GM12878 (cell line): ENCODE measurements at regions of chr4 and their contacts with region 1.

Region 1: DNA sequence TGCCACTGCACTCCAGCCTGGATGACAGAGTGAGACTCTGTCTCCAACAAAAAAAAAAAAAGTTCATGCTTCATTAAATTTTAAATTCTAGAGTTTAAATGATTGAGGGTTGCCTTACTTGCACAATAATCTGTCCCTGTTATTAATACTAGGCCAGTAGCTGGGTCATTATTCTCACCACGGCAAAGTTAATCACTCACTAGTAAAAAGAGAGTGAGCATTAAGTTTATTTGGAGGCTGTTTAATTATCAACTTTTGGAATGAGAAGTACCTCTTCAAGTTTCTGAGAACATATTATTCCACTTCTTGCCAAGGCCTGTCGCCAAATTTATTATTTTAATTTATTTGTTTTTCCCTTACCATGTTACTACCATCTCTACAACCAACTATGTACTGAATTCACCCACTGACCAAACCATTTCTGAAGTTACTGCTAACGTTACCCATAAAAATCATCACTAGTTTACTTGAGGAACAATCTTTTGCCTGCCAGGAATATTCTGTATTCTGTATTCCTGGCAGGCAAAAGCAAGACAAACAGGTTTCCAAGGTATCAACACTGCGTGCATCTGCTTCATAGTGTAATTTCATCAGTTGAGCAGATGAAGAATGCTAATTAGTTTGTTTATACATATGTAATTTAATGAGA is 26.5 kb downstream of the GUCY1A1 start:
- DNase-seq: no peak
- ATAC-seq: peak; percentile 25; the same call in 2 of the 3 replicates
- H3K4me3 ChIP-seq: no peak overlapping the region
- H3K27ac ChIP-seq: no peak overlapping the region
- H3K4me1 ChIP-seq: no peaks in the 10 kb centered on the region
- H3K27me3 ChIP-seq: no peaks in the 10 kb centered on the region
- CTCF ChIP-seq: no peak
- EP300 ChIP-seq: no peak
- POLR2A ChIP-seq: no peak
- RAD21 ChIP-seq: no peak

Region 2: GRCh38 chr4:155604718-155605626 is 88.2 kb before region 1 on chr4:
- CTCF ChIA-PET with region 1: no interaction called
- POLR2A ChIA-PET with region 1: no interaction called
- RAD21 ChIA-PET with region 1: no interaction called
- SMC1A ChIA-PET with region 1: no interaction called
- in situ Hi-C with region 1: no loop called
- intact Hi-C with region 1: no loop called
- DNase-seq: no peak
- ATAC-seq: no peak
- H3K4me3 ChIP-seq: no peak overlapping the region
- H3K27ac ChIP-seq: no peak overlapping the region
- H3K4me1 ChIP-seq: no peaks in the 10 kb centered on the region
- H3K27me3 ChIP-seq: no peaks in the 10 kb centered on the region
- CTCF ChIP-seq: no peak
- EP300 ChIP-seq: no peak
- POLR2A ChIP-seq: no peak
- RAD21 ChIP-seq: no peak

Region 3: GRCh38 chr4:155646001-155646400 is 47.1 kb before region 1 on chr4:
- CTCF ChIA-PET with region 1: no interaction called
- POLR2A ChIA-PET with region 1: no interaction called
- RAD21 ChIA-PET with region 1: no interaction called
- SMC1A ChIA-PET with region 1: no interaction called
- in situ Hi-C with region 1: no loop called
- intact Hi-C with region 1: no loop called
- DNase-seq: no peak
- ATAC-seq: no peak
- H3K4me3 ChIP-seq: no peak overlapping the region
- H3K27ac ChIP-seq: no peak overlapping the region
- H3K4me1 ChIP-seq: no peaks in the 10 kb centered on the region
- H3K27me3 ChIP-seq: no peaks in the 10 kb centered on the region
- CTCF ChIP-seq: no peak
- EP300 ChIP-seq: no peak
- POLR2A ChIP-seq: no peak
- RAD21 ChIP-seq: no peak

Region 4: DNA sequence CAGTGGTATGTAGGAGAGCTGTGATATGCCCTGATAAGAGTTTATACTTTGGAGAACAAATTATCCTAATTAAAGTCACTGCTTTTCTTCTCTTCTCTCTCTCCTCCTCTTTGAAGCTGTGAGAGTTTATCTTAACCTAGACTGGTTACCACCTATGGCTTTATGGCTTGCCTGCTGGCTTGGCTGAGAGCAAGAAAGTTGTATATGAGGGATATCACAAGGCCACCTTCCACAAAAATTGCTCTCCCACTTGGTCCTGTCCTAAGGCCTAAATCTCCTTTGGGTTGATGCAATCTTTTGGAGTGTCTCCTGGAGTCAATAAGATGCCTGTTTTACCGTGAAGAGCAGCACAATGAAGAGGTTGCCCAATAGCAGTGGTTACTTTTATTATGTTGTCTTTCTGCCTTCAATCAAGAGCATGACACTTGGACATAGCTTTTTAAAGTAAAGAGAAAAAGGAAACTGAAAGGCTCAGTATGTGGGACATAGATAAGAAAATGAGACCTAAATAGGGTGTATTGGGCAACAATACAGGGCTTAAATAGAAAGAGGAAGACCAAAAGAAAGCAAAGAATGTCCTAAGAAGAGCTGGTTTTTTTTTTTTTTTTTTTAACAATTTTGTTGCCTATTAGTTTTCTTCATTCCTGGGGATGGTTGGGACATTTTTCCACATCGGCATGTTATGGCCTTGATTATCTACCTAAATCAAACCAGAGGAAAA is 17.3 kb before region 1 on chr4:
- CTCF ChIA-PET with region 1: interaction called, 9 read pairs
- POLR2A ChIA-PET with region 1: interaction called, 10 read pairs
- RAD21 ChIA-PET with region 1: interaction called, 13 read pairs
- SMC1A ChIA-PET with region 1: interaction called, 52 read pairs
- in situ Hi-C with region 1: no loop called
- intact Hi-C with region 1: no loop called
- DNase-seq: no peak
- ATAC-seq: peak; percentile 86
- H3K4me3 ChIP-seq: no peak overlapping the region
- H3K27ac ChIP-seq: no peak overlapping the region
- H3K4me1 ChIP-seq: no peaks in the 10 kb centered on the region
- H3K27me3 ChIP-seq: no peaks in the 10 kb centered on the region
- CTCF ChIP-seq: no peak
- EP300 ChIP-seq: no peak
- POLR2A ChIP-seq: no peak
- RAD21 ChIP-seq: no peak

Region 5: DNA sequence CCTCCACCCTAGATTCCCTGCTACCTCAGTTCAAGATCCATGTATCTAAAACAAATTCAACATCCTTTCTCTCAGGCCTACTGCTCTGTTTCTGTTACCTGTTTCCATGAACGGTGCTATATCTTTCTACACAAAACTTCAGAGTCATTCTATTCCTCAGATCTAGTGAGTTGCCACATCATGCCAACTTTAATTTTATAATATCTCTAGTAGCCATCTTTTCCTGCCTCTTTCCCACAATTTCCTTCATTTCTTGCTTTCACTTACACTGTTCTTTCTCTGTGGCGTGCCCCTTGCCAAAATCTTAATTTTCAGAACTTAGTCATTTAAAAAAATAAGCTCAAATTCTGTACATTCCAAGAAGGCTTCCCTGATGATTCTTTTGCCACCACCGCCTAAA is 11.3 kb before region 1 on chr4:
- CTCF ChIA-PET with region 1: interaction called, 9 read pairs
- POLR2A ChIA-PET with region 1: interaction called, 10 read pairs
- RAD21 ChIA-PET with region 1: interaction called, 13 read pairs
- SMC1A ChIA-PET with region 1: interaction called, 52 read pairs
- in situ Hi-C with region 1: no loop called
- intact Hi-C with region 1: no loop called
- DNase-seq: no peak
- ATAC-seq: no peak
- H3K4me3 ChIP-seq: no peak overlapping the region
- H3K27ac ChIP-seq: no peak overlapping the region
- H3K4me1 ChIP-seq: no peaks in the 10 kb centered on the region
- H3K27me3 ChIP-seq: no peaks in the 10 kb centered on the region
- CTCF ChIP-seq: no peak
- EP300 ChIP-seq: no peak
- POLR2A ChIP-seq: no peak
- RAD21 ChIP-seq: no peak

Region 6: GRCh38 chr4:156312261-156312847 is 619.2 kb after region 1 on chr4:
- CTCF ChIA-PET with region 1: no interaction called
- POLR2A ChIA-PET with region 1: no interaction called
- RAD21 ChIA-PET with region 1: no interaction called
- SMC1A ChIA-PET with region 1: no interaction called
- in situ Hi-C with region 1: no loop called
- intact Hi-C with region 1: no loop called
- DNase-seq: no peak
- ATAC-seq: no peak; the same call in 2 of the 3 replicates
- H3K4me3 ChIP-seq: no peak overlapping the region
- H3K27ac ChIP-seq: no peak overlapping the region
- H3K4me1 ChIP-seq: no peaks in the 10 kb centered on the region
- H3K27me3 ChIP-seq: no peaks in the 10 kb centered on the region
- CTCF ChIP-seq: no peak
- EP300 ChIP-seq: no peak
- POLR2A ChIP-seq: no peak
- RAD21 ChIP-seq: no peak

Region 7: DNA sequence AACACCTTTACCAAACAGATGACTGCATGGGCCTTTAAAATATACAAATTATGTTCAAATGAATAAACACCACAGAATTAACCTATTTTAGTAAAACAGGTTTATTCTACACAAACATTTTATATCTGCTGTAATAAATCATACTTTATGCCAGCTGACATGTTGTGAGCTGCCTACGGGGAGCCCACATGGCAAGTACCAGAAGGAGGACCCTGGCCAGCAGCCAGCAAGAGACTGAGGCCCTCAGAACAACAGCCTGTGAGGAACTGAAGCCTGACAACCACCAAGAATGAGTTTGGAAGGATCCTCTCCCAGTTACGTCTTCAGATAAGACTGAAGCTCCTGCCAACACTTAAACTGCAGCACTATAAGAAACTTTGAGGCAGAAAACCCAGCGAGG is 901.5 kb after region 1 on chr4:
- CTCF ChIA-PET with region 1: no interaction called
- POLR2A ChIA-PET with region 1: no interaction called
- RAD21 ChIA-PET with region 1: no interaction called
- SMC1A ChIA-PET with region 1: no interaction called
- in situ Hi-C with region 1: no loop called
- intact Hi-C with region 1: no loop called
- DNase-seq: no peak
- ATAC-seq: no peak
- H3K4me3 ChIP-seq: no peak overlapping the region
- H3K27ac ChIP-seq: no peak overlapping the region
- H3K4me1 ChIP-seq: no peaks in the 10 kb centered on the region
- H3K27me3 ChIP-seq: no peaks in the 10 kb centered on the region
- CTCF ChIP-seq: no peak
- EP300 ChIP-seq: no peak
- POLR2A ChIP-seq: no peak
- RAD21 ChIP-seq: no peak